Activated CD4-positive, alpha-beta T cell treated with anti-CD3 and anti-CD28 coated beads, Interleukin-2, amount 10 ng/mL, durations not matched to agents 24 days and 14 days (primary cell): ENCODE measurements at regions of chr6 and their contacts with region 1.

Region 1: DNA sequence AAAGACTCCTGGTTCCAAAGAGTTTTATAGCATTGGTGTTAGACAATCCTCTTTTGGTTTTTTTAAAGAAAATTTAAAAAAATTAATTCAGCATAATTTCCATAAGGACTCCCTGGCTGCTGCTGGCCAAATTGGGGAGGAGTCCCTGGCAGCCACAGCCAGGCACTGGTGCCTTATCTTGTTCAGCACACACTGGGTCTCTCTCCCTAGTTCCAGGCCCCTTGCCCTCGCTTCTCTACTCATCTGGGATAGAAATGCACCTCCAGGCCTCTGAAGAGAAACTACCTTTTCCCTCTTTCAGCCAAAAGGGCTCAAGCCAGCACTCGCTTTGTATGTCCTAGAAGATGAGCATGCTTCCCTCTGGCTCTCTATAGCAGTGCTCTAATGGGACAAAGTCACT is 13.4 kb upstream of the MAPK13 start:
- DNase-seq: no peak
- H3K4me3 Mint-ChIP-seq: no peak overlapping the region
- H3K27ac Mint-ChIP-seq: peak overlapping the region; percentile 14
- H3K4me1 Mint-ChIP-seq: peaks cover 76% of the 10 kb centered on the region
- H3K27me3 Mint-ChIP-seq: no peaks in the 10 kb centered on the region

Region 2: GRCh38 chr6:36094753-36095496 is 22.0 kb before region 1 on chr6:
- intact Hi-C with region 1: loop called (anchors 2 kb)
- DNase-seq: peak; percentile 94
- H3K4me3 Mint-ChIP-seq: no peak overlapping the region
- H3K27ac Mint-ChIP-seq: no peak overlapping the region
- H3K4me1 Mint-ChIP-seq: peaks cover 21% of the 10 kb centered on the region
- H3K27me3 Mint-ChIP-seq: no peaks in the 10 kb centered on the region